ENCODE measurements at regions of chr11 and their contacts with region 1.

Region 1: DNA sequence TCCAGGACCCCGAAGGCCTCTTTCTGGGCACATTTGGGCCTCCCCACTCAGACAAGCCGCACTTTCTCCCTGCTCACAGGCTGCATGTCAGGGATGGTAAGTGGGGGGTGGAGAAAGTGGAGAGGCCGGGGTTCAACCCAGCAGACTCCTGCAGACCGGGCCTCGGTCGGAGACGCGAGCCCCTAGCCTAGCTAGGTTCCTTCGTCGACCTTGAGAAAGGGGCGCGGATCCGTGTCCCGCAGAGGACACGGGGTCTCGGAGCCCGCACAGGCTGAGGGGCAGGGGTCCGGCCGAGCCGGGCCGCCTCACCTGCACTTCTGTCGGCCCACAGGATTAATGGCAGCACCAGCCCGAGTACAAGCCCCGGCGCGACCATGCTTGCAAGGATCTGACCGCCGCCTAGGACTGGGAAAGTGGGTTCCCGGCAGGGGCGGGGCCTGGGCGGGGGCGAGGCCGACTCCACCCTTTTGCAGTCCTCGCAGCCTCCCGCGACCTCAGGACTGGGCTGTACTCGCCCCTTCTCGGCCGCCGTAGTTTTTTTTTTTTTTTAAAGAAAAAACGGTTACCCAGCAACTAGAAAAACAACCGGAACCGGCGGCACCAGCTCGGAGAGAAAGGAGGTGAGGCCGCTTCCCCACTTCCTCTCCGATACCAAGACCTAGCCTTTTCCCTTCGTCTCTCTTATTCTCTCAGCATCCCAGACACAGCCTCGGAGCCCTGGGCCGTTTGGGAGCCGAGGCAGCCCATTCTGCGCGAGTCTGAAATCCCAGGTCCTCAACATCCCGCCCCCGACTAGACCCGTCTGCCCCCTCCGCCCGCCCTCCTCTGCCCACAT is at the starts of genes SIAE and SPA17:
- DNase-seq: peak; percentile 96
- CTCF ChIP-seq: no peak

Region 2: DNA sequence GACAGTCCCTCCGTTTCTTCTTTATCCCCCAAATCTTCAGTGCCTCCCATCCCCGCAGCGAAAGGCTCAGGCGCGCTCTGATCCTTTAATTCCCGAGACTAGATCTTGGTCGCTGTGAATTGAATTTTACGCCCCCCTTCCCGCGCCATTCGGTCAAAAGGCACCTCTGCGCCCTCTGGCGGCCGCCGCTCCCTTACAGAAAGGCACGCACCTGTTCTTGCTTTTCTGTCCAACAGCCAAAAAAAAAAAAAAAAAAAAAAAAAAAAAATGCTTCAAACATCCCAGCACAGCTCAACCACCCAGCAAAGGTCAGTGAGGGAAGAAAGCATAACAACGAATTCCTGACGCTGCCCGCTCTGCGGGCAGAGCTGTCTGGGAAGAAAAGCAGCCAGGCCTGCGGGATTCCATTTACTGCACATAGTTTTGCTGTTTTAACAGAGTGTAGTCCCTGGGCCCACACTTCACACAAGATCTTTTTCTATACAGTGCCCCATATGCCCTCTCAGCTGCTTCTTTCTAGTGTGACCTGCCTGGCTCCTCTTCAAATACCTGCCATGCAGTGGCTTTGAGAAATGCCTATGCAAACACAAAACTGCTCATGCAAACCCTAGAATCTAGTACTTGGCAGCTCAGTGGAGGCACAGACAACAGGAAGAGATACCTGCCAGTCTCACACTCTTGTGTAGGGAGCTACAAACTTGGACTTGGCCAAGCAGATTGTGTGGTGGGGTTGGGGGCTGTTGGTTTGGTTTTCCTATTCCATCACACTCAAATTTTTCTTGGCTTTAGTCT is 89.8 kb after region 1 on chr11:
- in situ Hi-C with region 1: loop called (anchors 10 kb)
- DNase-seq: peak; percentile 71
- CTCF ChIP-seq: peak; percentile 88

Region 3: GRCh38 chr11:124837491-124837856 is 163.9 kb after region 1 on chr11:
- in situ Hi-C with region 1: loop called (anchors 10 kb)
- DNase-seq: peak; percentile 57
- CTCF ChIP-seq: peak; percentile 45

Measured in GM13976 (cell line).